ENCODE measurements at regions of chr15 and their contacts with region 1.

Region 1: GRCh38 chr15:45118131-45118588 is 4.0 kb downstream of the DUOXA2 start:
- DNase-seq: peak; percentile 93
- ATAC-seq: peak; percentile 99
- H3K4me3 Mint-ChIP-seq: peak overlapping the region; percentile 36
- H3K27ac Mint-ChIP-seq: no peak overlapping the region
- H3K4me1 Mint-ChIP-seq: peaks cover 33% of the 10 kb centered on the region
- H3K27me3 Mint-ChIP-seq: peaks cover 58% of the 10 kb centered on the region
- CTCF ChIP-seq: peak; percentile 100

Region 2: DNA sequence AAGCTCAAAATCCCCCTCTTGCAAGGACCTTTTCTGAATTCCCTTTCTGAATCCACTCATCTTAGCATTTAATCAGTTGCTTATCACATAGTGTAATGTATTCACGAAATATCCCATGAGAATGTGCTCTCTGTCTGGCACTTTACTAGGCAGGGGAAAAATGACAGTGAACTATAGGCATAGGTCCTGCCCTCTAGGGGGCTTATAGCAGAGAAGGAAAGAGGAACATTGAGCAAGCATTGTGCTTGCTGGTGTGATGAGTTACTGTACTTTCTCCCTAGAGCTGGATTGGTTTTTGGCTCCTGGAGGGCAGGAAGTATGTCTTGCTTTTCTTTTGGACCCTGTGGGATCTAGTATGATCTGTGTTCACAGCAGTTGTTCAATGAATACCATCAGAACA is 30.6 kb before region 1 on chr15:
- CTCF ChIA-PET with region 1: interaction called, 10 read pairs
- POLR2A ChIA-PET with region 1: no interaction called
- intact Hi-C with region 1: no loop called
- DNase-seq: no peak
- ATAC-seq: no peak
- H3K4me3 Mint-ChIP-seq: no peak overlapping the region
- H3K27ac Mint-ChIP-seq: no peak overlapping the region
- H3K4me1 Mint-ChIP-seq: no peaks in the 10 kb centered on the region
- H3K27me3 Mint-ChIP-seq: peaks cover 28% of the 10 kb centered on the region
- CTCF ChIP-seq: no peak

Region 3: DNA sequence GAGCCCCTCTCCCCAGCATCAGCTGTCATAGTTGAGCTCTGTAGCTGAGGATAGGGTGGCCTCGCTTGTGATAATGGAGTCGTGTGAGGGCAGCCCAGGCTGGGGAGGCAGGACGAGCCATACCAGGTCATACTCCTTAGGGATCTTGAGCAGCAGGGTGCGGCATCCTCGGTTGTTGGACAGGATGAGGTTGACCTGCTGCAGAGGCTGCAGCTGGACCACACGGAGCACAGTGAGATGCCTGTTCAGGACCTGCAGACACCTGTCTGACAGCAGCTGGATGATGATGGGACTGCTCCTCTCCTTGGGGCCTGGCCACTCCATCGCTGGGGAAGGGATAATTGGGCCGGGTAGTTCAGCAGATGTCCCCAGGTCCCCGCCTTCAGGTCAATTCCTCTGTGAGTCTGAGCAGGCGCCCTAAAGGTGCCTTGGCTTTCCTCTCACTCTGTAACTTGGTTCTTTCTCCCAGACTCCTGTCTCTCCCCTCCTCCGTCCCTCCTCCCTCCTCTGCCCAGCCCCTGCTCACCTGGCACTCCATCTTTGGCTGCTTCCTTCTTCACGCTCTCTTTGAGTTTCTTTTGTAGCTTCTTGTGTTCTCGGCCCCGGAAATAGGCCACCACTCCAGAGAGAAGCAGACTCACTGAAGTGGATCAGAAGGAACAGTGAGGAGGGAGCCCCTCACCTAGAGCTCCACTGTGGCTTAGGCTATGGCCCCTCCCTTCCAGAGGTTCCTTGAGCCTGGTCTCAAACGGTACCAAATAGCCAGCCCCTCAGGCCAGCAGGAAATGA is 12.0 kb before region 1 on chr15:
- CTCF ChIA-PET with region 1: interaction called, 19 read pairs
- POLR2A ChIA-PET with region 1: no interaction called
- intact Hi-C with region 1: no loop called
- DNase-seq: no peak
- ATAC-seq: no peak
- H3K4me3 Mint-ChIP-seq: no peak overlapping the region
- H3K27ac Mint-ChIP-seq: no peak overlapping the region
- H3K4me1 Mint-ChIP-seq: peaks cover 4% of the 10 kb centered on the region
- H3K27me3 Mint-ChIP-seq: peaks cover 20% of the 10 kb centered on the region
- CTCF ChIP-seq: no peak

Region 4: DNA sequence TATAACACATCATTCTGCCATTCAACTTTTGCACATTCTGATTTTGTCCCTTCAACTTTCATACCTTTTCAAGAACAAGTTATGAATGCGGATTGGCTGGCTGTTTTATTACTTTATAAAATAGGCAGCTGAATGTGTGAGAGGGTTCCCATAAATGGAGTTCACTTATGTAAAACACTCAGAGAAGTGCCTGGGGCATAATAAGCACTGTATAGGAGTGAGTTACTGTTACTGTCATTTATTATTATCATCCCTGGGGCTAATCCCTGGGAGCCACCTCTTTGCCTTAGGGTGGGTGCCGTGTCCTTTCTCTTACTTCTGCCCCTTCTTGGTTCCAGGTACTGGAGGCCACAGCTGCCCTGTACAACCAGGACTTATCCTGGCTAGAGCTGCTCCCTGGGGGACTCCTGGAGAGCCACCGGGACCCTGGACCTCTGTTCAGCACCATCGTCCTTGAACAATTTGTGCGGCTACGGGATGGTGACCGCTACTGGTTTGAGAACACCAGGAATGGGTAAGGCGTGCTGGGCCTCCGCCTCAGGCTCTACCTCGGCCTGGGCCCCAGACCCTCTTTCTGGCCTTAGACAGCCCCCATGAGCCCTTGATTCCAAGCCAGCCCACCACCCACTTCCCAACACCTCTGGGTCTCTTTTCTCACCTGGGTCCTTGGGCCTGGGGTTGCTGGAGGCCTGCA is 22.5 kb after region 1 on chr15:
- CTCF ChIA-PET with region 1: interaction called, 48 read pairs
- POLR2A ChIA-PET with region 1: no interaction called
- intact Hi-C with region 1: no loop called
- DNase-seq: no peak
- ATAC-seq: no peak
- H3K4me3 Mint-ChIP-seq: no peak overlapping the region
- H3K27ac Mint-ChIP-seq: no peak overlapping the region
- H3K4me1 Mint-ChIP-seq: peaks cover 5% of the 10 kb centered on the region
- H3K27me3 Mint-ChIP-seq: peaks cover 8% of the 10 kb centered on the region
- CTCF ChIP-seq: no peak

Region 5: DNA sequence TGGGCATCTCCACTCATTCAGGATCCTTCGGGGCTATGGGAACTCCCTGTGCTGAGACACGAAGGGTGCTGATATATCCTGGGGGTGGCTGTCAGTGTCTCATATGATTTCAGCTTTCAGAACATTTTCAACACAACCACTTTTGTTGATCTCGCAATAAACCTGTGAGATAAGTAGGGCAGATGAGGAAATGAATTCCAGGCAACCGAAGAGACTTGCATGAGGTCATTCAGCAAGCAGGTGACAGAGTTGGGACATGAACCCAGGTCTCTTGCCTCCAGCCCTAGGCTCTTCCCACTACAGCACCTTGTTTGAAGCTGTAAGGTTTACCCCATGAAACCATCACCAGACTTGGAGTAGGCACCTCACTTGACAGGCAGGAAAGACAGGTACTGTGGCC is 28.2 kb after region 1 on chr15:
- CTCF ChIA-PET with region 1: interaction called, 15 read pairs
- POLR2A ChIA-PET with region 1: no interaction called
- intact Hi-C with region 1: no loop called
- DNase-seq: no peak
- ATAC-seq: no peak
- H3K4me3 Mint-ChIP-seq: no peak overlapping the region
- H3K27ac Mint-ChIP-seq: no peak overlapping the region
- H3K4me1 Mint-ChIP-seq: no peaks in the 10 kb centered on the region
- H3K27me3 Mint-ChIP-seq: no peaks in the 10 kb centered on the region
- CTCF ChIP-seq: no peak

Measured in activated CD8-positive, alpha-beta T cell treated with anti-CD3 and anti-CD28 coated beads for 36 hours (primary cell).